ENCODE measurements at regions of chr19 and their contacts with region 1.

Region 1: GRCh38 chr19:49443366-49444099 is 2.2 kb upstream of the SLC17A7 start:
- DNase-seq: peak; percentile 96
- H3K4me3 Mint-ChIP-seq: peak overlapping the region; percentile 73
- H3K27ac Mint-ChIP-seq: peak overlapping the region; percentile 24
- H3K4me1 Mint-ChIP-seq: peaks cover 34% of the 10 kb centered on the region
- H3K27me3 Mint-ChIP-seq: peaks cover 46% of the 10 kb centered on the region
- CTCF ChIP-seq: peak; percentile 93

Region 2: GRCh38 chr19:49391581-49392399 is 51.7 kb before region 1 on chr19:
- CTCF ChIA-PET with region 1: interaction called, 10 read pairs
- intact Hi-C with region 1: loop called (anchors 1 kb)
- DNase-seq: peak; percentile 87
- H3K4me3 Mint-ChIP-seq: no peak overlapping the region
- H3K27ac Mint-ChIP-seq: no peak overlapping the region
- H3K4me1 Mint-ChIP-seq: peaks cover 9% of the 10 kb centered on the region
- H3K27me3 Mint-ChIP-seq: peaks cover 83% of the 10 kb centered on the region
- CTCF ChIP-seq: peak; percentile 85

Region 3: DNA sequence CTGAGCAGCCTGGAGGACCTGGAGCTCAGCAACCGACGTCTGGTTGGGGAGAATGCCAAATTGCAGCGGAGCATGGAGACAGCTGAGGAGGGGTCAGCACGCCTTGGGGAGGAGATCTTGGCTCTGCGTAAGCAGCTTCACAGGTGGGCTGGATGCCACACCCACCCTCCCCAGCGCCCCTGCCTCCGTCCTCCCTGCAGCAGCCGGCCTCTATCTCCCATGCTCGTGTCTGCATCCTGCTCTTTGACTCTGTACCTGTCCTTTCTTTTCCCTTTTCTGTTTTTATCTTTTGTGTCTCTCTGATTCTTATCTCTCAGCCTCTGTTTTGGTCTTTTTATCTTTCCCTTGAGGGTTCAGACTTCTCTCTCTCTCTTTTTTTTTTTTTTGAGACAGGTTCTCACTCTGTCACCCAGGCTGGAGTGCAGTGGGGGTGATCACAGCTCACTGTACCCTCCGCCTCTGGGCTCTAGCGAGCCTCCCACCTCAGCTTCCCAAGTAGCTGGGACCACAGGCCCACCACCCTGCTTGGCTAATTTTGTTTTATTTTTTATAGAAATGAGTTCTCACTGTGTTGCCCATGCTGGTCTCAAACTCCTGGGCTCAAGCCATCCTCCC is 45.4 kb before region 1 on chr19:
- CTCF ChIA-PET with region 1: interaction called, 13 read pairs
- intact Hi-C with region 1: no loop called
- DNase-seq: no peak
- H3K4me3 Mint-ChIP-seq: no peak overlapping the region
- H3K27ac Mint-ChIP-seq: no peak overlapping the region
- H3K4me1 Mint-ChIP-seq: no peaks in the 10 kb centered on the region
- H3K27me3 Mint-ChIP-seq: peaks cover 56% of the 10 kb centered on the region
- CTCF ChIP-seq: no peak

Region 4: DNA sequence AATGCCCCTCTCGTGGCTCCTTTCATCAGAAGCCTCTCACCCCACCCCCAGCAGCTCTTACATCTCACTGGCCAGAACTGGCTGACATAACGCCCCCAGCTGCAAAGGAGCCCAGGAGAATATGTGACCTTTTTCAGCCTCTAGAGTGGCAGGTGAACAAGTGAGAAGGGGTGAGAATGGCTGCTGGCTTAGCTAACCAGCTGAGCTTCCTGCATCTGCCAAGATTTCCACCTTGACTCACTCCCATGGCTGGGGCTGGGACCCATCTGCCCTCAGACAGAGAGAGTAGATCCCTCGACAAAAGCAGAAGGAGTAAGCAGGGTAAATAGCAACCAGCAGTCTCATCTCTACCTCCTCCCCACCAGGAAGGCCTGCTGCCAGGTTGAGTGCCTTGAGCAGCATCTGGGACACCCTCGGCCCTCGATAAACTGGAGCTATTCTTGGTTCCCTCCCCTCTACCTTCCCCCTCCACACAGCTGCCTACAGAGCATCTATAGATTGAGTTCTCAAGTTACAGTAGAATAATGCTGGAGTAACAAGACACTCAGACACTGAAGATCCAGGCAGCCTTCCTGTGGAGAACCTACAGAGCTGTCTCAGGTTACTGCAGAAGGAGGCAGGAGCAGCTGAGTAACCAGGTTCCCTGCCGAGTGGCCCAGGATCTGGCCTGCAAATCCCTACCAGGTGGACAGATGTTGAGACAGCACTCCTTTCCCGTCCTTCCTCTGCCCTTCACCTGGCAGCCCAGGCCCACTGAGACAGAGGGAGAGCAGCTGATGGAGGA is 39.9 kb before region 1 on chr19:
- CTCF ChIA-PET with region 1: interaction called, 13 read pairs
- intact Hi-C with region 1: no loop called
- DNase-seq: no peak
- H3K4me3 Mint-ChIP-seq: no peak overlapping the region
- H3K27ac Mint-ChIP-seq: no peak overlapping the region
- H3K4me1 Mint-ChIP-seq: no peaks in the 10 kb centered on the region
- H3K27me3 Mint-ChIP-seq: peaks cover 37% of the 10 kb centered on the region
- CTCF ChIP-seq: no peak